ENCODE measurements at regions of chr1 and their contacts with region 1.

Region 1: DNA sequence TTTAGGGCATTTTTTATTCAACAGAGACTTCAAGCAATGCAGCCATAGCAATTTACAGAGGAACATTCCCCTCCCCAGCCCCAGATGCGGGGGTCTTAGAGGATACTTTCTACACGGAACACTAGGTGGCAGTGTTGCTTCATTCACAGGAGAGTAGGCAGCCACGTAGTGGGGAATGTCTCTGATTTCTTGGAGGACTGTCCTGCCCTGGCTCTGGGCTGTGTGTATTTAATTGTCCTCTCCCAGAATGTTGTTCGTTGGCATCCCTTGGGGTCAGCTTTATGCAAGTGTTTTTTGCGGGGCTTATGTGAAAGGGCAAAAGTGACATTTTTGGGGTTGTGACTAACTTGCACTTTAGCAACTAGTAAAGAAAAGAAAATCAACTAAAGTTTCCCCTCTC is 96.9 kb downstream of the PAPPA2 start:
- ATAC-seq: peak; percentile 92 to 100 (median 97)
- H3K4me3 ChIP-seq: no peak overlapping the region
- H3K27ac ChIP-seq: no peak overlapping the region
- H3K4me1 ChIP-seq: peaks cover 0 to 3% of the 10 kb centered on the region in 2 donors

Region 2: DNA sequence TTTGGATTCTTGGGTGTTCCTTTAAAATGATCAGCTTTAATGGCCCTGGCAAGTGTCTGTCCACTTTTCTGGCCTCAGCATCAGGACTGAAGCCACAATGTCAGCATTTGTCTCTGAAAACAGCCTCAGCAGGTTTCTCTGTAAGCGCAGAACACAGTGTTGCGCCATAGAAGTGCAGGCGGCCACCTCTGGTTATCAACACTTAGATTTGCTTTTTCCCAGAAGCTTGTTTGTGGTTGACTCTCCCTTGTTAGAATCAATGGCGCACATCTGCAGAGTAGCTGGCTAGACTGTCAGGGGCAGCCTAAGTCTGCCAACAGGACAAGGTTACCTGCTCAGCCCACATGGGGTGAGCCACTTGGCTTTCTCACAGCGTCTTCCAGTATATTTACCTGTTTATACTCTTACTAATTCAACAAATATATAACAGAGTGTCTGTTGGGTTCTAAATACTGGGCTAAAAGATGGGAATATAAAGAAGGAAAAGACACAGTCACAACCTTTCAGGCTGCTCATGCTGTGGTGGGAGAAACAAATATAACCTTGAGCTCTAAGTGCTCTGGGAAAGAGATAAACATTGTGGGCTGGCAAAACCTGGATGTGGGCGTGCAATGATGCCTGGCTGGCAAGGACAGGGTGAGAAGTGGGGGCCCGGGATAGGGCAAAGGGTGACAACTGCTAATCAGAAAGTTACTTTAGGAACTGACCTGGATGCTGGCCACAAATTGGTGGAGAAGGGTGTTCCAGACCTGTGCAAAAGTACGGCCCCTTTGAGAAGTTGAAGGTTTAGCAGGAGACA is 1218.0 kb before region 1 on chr1:
- in situ Hi-C with region 1: no loop called
- ATAC-seq: no peak
- H3K4me3 ChIP-seq: no peak overlapping the region
- H3K27ac ChIP-seq: no peak overlapping the region
- H3K4me1 ChIP-seq: no peaks in the 10 kb centered on the region

Region 3: GRCh38 chr1:176466514-176467220 is 93.2 kb before region 1 on chr1:
- in situ Hi-C with region 1: loop called in 1 of 9 experiments (anchors 10 kb)
- ATAC-seq: peak in 6 of 8 experiments; percentile 17 to 71 (median 43)
- H3K4me3 ChIP-seq: no peak overlapping the region
- H3K27ac ChIP-seq: no peak overlapping the region
- H3K4me1 ChIP-seq: no peaks in the 10 kb centered on the region

Region 4: GRCh38 chr1:176691251-176692228 is 131.7 kb after region 1 on chr1:
- in situ Hi-C with region 1: loop called in 1 of 9 experiments (anchors 25 kb)
- ATAC-seq: peak; percentile 51 to 88 (median 74)
- H3K4me3 ChIP-seq: no peak overlapping the region
- H3K27ac ChIP-seq: no peak overlapping the region
- H3K4me1 ChIP-seq: peaks cover 8 to 9% of the 10 kb centered on the region in 2 donors

Region 5: GRCh38 chr1:176843352-176844297 is 283.7 kb after region 1 on chr1:
- in situ Hi-C with region 1: loop called in 5 of 9 experiments (anchors 10 to 25 kb)
- ATAC-seq: peak in 7 of 8 experiments; percentile 37 to 93 (median 58)
- H3K4me3 ChIP-seq: no peak overlapping the region
- H3K27ac ChIP-seq: no peak overlapping the region
- H3K4me1 ChIP-seq: peaks cover 0 to 14% of the 10 kb centered on the region in 2 donors

Region 6: GRCh38 chr1:176857632-176858031 is 297.8 kb after region 1 on chr1:
- in situ Hi-C with region 1: loop called in 2 of 9 experiments (anchors 25 kb)
- ATAC-seq: peak in 2 of 8 experiments; percentile 69 to 86
- H3K4me3 ChIP-seq: no peak overlapping the region
- H3K27ac ChIP-seq: no peak overlapping the region
- H3K4me1 ChIP-seq: peaks cover 8% of the 10 kb centered on the region in 2 donors

Measured in motor neuron (in vitro differentiated cells).